Right ventricle myocardium inferior (tissue), 1 donor: ENCODE measurements at regions of chr4 and their contacts with region 1.

Region 1: DNA sequence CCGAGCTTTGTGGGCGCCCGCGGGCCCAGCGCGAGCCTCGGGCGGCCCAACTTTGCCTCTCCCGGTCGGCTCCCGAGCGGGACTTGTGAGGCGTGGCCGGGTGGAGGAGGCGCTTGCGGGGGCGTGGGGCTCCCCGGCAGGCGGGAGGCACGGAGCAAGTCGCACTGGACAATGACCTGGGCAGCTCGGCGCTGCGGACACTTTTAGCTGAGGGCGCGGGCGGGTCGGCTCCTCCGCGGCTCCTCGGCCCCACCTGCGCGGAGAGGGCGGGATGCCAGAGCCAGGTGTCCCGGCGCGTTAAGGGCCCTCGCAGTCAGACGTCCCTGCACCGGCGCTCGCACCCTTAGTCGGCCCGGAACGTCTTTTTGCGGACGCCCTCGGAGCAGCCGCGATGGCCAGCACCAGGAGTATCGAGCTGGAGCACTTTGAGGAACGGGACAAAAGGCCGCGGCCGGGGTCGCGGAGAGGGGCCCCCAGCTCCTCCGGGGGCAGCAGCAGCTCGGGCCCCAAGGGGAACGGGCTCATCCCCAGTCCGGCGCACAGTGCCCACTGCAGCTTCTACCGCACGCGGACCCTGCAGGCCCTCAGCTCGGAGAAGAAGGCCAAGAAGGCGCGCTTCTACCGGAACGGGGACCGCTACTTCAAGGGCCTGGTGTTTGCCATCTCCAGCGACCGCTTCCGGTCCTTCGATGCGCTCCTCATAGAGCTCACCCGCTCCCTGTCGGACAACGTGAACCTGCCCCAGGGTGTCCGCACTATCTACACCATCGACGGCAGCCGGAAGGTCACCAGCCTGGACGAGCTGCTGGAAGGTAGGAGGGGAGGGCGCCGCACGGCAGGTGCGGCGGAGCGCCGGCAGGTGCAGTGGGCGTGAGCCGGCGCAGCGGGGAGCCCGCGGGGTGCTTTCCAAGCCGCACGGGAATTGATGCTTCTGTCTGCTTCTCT is 664 bp downstream of the DCLK2 start:
- DNase-seq: peak; percentile 77
- ATAC-seq: peak; percentile 63

Region 2: GRCh38 chr4:150010525-150011126 is 68.3 kb before region 1 on chr4:
- intact Hi-C with region 1: loop called (anchors 5 kb)
- DNase-seq: no peak
- ATAC-seq: peak; percentile 77

Region 3: GRCh38 chr4:150119492-150119891 is 40.6 kb after region 1 on chr4:
- intact Hi-C with region 1: loop called (anchors 5 kb)
- DNase-seq: no peak
- ATAC-seq: no peak

Region 4: GRCh38 chr4:150150629-150151062 is 71.7 kb after region 1 on chr4:
- intact Hi-C with region 1: loop called (anchors 2 kb)
- DNase-seq: no peak
- ATAC-seq: peak; percentile 86

Region 5: GRCh38 chr4:150164956-150165629 is 86.2 kb after region 1 on chr4:
- intact Hi-C with region 1: loop called (anchors 5 kb)
- DNase-seq: no peak
- ATAC-seq: no peak

Region 6: GRCh38 chr4:150181536-150181935 is 102.6 kb after region 1 on chr4:
- intact Hi-C with region 1: loop called (anchors 5 kb)
- DNase-seq: no peak
- ATAC-seq: peak; percentile 31

Region 7: GRCh38 chr4:150209140-150209829 is 130.4 kb after region 1 on chr4:
- intact Hi-C with region 1: loop called (anchors 2 kb)
- DNase-seq: no peak
- ATAC-seq: peak; percentile 81